OCI-LY7 (cell line): ENCODE measurements at regions of chr17 and their contacts with region 1.

Region 1: DNA sequence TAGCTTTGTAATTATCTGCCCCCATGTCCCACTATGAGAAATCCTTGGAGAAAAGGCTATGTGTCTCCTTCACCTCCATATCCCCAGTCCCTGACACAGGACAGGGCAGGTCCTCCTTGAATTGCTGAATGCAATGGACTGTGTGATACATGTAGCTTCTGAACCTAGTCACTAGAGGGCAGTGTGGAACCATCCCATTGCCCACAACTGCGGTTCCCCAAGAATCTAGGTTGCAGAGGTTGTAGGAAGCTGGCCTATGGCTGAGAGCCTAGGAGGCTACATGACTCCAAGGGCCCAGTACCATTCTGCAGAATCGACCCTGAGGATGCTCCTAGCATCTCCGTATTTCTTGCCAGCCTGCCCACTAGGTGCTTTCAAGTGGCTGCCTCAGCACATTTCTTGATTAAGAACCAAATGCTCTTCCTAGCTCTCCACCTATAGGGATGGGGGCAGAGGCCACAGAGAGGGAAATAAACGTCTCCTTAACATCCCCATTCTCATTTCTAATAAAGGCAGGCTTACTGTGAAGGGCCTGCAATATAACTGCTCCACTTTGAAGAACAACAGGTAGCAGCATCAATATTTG is 394.0 kb downstream of the CA10 start:
- DNase-seq: peak; percentile 56
- H3K4me3 ChIP-seq: no peak overlapping the region
- H3K27ac ChIP-seq: no peak overlapping the region
- H3K4me1 ChIP-seq: no peaks in the 10 kb centered on the region
- CTCF ChIP-seq: peak; percentile 85

Region 2: DNA sequence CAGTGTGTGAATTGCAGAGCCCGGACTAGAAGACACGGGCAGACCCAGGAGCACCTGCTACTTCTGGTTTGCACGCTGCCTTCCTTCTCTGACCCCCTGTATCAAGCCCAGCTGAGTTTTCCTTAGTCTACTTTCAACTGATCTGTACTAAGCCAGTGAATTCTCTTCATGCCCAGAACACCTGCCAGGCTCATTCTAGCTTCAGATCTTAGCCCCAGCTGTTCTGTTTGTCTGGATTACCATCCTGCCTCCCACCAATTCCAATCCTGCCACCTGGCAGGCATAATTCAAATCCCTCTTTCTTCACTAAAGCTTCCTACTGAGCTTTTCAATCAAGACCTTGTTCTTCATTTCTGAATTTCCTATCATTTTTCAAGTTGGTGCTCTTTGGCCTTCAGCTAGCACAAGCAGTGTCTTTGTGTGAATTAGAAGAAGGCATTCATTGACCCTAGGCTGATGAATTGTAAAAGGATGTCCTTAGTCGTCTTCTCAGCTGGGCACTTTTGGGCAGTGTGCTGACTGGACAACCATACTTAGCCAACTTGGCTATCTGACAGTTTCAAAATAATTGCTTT is 146.5 kb before region 1 on chr17:
- CTCF ChIA-PET with region 1: no interaction called
- POLR2A ChIA-PET with region 1: no interaction called
- intact Hi-C with region 1: no loop called
- DNase-seq: no peak
- H3K4me3 ChIP-seq: no peak overlapping the region
- H3K27ac ChIP-seq: no peak overlapping the region
- H3K4me1 ChIP-seq: no peaks in the 10 kb centered on the region
- CTCF ChIP-seq: no peak

Region 3: GRCh38 chr17:52106638-52107261 is 342.3 kb after region 1 on chr17:
- CTCF ChIA-PET with region 1: no interaction called
- POLR2A ChIA-PET with region 1: no interaction called
- intact Hi-C with region 1: loop called (anchors 2 kb)
- DNase-seq: peak; percentile 43
- H3K4me3 ChIP-seq: no peak overlapping the region
- H3K27ac ChIP-seq: no peak overlapping the region
- H3K4me1 ChIP-seq: no peaks in the 10 kb centered on the region
- CTCF ChIP-seq: peak; percentile 95